Activated T-helper 1 cell treated with anti-CD3 and anti-CD28 coated beads, Interleukin-12 subunit alpha, Interleukin-12 subunit beta, Interleukin-2, Interleukin-4 antibody, amounts not matched to agents 30 ng/mL and 10 ng/mL and 1 ng/mL, durations not matched to agents 14 hours and 24 hours and 36 hours (primary cell): ENCODE measurements at regions of chr2 and their contacts with region 1.

Region 1: DNA sequence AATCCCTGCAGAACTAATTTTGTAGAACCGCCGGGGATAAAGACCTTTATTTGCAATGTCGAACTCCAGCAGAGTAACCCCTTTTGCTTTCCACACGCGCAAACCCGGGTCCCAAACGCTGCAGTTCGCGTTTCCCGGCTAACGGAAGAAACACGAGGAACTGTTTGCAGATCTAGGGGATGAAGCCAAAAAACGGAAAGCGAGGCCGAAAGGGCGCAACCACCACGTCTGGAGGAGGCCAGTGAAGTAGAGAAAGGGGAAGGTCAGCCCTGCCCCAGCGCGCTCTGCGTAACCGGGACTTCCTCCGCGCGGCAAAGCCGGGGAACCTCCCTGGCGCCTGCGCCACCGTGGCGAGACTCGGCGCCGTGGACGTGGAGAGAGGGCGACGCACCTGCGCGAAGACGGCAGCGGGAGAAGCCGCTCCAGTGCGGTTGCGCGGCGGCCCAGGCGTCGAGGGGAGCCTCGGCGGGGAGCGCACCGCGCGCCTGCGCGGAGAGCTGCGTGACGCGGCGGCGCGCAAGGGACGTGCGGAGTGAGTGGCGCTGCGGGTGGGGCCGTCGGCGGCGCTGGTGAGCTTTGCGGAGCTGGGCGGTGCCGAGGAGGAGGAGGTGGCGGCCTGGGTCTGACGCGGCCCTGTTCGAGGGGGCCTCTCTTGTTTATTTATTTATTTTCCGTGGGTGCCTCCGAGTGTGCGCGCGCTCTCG is at the start of gene PPP1CB:
- DNase-seq: peak; percentile 98
- H3K4me3 Mint-ChIP-seq: peak within 1 kb of the TSS; percentile 95
- H3K27ac Mint-ChIP-seq: peak within 1 kb of the TSS; percentile 96
- H3K4me1 Mint-ChIP-seq: peaks cover 62% of the 10 kb centered on the region
- H3K27me3 Mint-ChIP-seq: no peaks in the 10 kb centered on the region
- total RNA-seq, gene PPP1CB: 262 and 268 TPM in 2 replicates

Region 2: DNA sequence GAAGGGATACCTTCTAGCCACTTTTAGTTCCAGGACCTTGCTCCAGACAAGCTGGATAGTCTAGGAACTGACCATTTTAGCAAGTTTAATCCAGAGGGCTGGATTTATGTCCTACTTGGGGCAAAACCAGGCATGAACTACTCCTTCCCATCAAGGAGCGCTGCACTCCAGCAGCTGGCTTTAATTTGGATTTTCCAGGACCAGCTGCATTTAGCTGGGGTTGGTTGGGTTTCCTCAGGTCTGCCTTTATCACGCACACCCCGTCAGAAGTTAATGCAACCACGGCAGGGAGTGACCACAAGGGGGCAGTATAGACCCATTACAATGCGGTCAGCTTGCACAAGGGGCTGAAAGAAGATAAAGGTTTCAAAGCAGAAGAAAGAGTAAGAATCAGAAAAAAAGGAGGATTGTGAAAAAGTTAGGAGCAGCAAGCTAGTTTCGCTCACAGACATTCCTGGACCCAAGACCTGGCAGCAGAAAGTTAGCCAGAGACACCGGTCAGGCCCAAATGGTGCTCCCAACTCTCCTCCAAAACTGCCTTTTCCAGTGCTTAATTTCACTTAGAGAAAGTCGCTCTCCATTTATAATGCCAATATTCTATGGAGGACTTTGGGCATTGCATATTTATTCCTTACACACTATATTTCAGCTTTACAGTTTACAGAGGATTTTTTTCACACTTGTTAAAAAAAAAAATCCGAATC is 1047.6 kb before region 1 on chr2:
- intact Hi-C with region 1: loop called (anchors 10 kb)
- DNase-seq: peak; percentile 74
- H3K4me3 Mint-ChIP-seq: no peak overlapping the region
- H3K27ac Mint-ChIP-seq: no peak overlapping the region
- H3K4me1 Mint-ChIP-seq: peaks cover 15% of the 10 kb centered on the region
- H3K27me3 Mint-ChIP-seq: no peaks in the 10 kb centered on the region

Region 3: GRCh38 chr2:28566521-28567041 is 184.8 kb before region 1 on chr2:
- intact Hi-C with region 1: loop called (anchors 1 kb)
- DNase-seq: peak; percentile 86
- H3K4me3 Mint-ChIP-seq: peak overlapping the region; percentile 86
- H3K27ac Mint-ChIP-seq: peak overlapping the region; percentile 71
- H3K4me1 Mint-ChIP-seq: peaks cover 24% of the 10 kb centered on the region
- H3K27me3 Mint-ChIP-seq: peaks cover 4% of the 10 kb centered on the region

Region 4: GRCh38 chr2:28615706-28616105 is 135.7 kb before region 1 on chr2:
- intact Hi-C with region 1: loop called (anchors 1 kb)
- DNase-seq: no peak
- H3K4me3 Mint-ChIP-seq: no peak overlapping the region
- H3K27ac Mint-ChIP-seq: no peak overlapping the region
- H3K4me1 Mint-ChIP-seq: peaks cover 11% of the 10 kb centered on the region
- H3K27me3 Mint-ChIP-seq: no peaks in the 10 kb centered on the region

Region 5: DNA sequence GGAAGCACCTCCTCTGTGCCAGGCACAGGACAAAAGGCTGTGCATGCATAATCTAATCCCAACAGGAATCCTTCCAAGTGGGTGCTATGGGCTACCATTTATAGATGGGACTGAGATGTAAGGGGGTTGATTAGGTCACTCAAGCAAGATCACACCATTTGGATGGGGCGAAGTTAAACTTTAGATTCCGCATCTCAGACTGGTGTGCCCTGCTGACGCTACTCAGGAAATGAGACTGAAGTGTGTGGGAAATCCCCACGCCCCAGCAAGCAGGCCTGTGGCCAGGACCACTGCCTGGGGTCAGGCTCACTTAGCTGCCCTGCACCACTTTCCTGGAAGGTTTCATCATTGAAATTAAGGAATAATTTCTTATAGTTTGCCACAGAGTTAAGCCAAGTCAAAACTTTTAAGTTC is 70.2 kb before region 1 on chr2:
- intact Hi-C with region 1: loop called (anchors 1 kb)
- DNase-seq: peak; percentile 67
- H3K4me3 Mint-ChIP-seq: peak overlapping the region; percentile 73
- H3K27ac Mint-ChIP-seq: peak overlapping the region; percentile 90
- H3K4me1 Mint-ChIP-seq: peaks cover 80% of the 10 kb centered on the region
- H3K27me3 Mint-ChIP-seq: no peaks in the 10 kb centered on the region

Region 6: DNA sequence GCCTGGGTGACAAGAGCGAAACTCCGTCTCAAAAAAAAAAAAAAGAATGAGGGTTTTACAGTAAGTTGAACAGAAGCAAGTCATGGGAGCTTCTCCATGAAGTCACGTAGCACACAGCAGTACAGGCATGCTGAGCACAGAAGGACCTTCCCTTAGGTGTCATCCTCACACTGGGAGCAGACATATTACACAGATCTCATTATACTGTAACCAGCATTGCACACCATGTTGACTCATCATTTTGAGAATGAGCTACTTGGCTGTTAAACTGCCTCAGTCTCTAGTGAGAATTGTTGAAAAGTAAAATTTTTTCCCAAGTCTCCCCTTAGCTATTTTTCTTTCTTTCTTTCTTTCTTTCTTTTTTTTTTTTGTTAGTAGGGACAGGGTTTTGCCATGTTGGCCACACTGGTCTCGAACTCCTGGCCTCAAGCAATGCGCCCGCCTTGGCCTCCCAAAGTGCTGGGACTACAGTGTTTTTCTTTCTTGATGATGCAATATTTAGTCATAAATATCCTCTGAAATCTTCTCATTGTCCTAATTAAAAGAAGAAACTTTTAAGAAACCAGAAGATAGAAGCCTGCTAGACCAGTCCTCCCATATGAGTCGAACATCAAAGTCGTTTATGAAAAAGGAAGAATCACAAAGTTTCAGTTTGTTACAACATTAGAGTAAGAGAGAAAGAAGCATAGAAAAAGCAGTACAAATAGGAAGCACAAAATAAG is 37.7 kb before region 1 on chr2:
- intact Hi-C with region 1: no loop called
- DNase-seq: no peak
- H3K4me3 Mint-ChIP-seq: no peak overlapping the region
- H3K27ac Mint-ChIP-seq: no peak overlapping the region
- H3K4me1 Mint-ChIP-seq: peaks cover 26% of the 10 kb centered on the region
- H3K27me3 Mint-ChIP-seq: no peaks in the 10 kb centered on the region

Region 7: DNA sequence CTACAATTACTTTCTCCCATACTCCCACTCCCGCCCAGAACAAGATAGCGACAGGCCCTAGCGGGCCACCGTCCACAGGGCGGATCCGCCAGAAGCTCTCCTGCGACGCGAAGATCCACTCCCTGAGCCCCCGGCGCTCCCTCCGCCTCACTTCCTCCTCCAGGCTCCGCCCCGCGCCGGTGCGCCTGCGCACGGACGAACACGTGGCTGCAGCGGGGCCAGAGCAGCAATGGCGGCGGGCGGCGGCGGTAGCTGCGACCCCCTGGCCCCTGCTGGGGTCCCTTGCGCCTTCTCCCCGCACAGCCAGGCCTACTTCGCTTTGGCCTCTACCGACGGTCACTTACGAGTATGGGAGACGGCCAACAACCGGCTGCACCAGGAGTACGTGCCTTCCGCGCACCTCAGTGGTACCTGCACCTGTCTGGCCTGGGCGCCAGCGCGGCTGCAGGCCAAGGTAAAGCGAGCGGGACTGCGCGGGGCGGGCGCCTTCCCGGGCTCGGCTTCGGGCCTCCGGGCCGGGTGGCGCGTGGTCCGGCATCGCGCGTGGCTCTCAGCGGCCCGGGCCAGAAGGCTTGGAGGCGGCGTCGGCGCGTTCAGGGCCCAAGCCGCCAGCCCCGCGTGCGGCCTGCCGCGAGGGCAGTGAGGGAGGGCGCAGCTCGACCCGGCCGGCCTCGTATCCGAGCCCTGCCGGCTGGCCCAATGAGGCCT is 143.2 kb after region 1 on chr2 and contains the start of gene WDR43:
- intact Hi-C with region 1: loop called (anchors 1 kb)
- DNase-seq: peak; percentile 99
- H3K4me3 Mint-ChIP-seq: peak within 1 kb of the TSS; percentile 100
- H3K27ac Mint-ChIP-seq: peak within 1 kb of the TSS; percentile 96
- H3K4me1 Mint-ChIP-seq: peaks cover 40% of the 10 kb centered on the region
- H3K27me3 Mint-ChIP-seq: no peaks in the 10 kb centered on the region
- total RNA-seq, gene WDR43: 188 and 190 TPM in 2 replicates